Activated B cell treated with CpG ODN at 0.5 μM for 24 hours (primary cell): ENCODE measurements at regions of chr11 and their contacts with region 1.

Region 1: DNA sequence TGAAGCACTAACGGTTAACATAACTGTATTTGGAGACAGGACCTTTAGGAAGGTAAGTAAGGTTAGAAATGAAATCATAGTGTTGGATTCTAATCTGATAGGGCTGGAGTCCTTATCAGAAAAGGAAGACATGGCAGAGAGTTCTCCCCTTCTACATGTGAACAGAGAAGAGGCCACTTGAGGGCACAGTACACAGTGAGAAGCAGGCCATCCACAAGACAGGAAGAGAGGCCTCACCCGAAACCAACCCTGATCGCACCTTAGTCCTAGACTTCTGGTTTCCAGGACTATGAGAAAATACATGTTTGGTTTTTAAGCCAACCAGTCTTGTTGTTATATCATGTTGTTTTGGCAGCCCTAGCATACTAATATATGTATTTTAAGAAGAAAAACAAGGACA is 170.0 kb downstream of the LRRC4C start:
- DNase-seq: no peak
- ATAC-seq: no peak
- H3K4me3 Mint-ChIP-seq: no peak overlapping the region
- H3K27ac Mint-ChIP-seq: peak overlapping the region; percentile 16
- H3K4me1 Mint-ChIP-seq: peaks cover 3% of the 10 kb centered on the region
- H3K27me3 Mint-ChIP-seq: no peaks in the 10 kb centered on the region
- CTCF ChIP-seq: no peak

Region 2: DNA sequence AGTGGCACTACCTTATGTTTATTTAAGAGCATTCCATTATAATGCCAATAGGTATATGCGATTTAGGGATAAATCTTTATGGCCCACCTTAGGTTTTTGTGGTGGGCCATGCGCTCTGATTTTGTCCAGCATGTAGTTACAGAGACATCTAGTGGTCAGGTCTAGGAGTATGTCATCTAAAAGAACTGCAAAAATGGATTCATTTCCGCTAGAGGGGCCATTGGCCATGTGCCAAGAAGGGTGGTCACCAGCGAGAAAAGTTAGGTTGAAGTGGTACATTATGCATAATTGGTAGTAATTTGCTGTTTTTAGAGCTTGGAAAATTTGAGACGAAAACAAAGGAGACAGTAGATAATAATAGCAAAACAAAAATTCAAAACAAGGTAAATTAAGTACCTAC is 142.4 kb after region 1 on chr11:
- CTCF ChIA-PET with region 1: no interaction called
- POLR2A ChIA-PET with region 1: no interaction called
- intact Hi-C with region 1: loop called (anchors 5 kb)
- DNase-seq: no peak
- ATAC-seq: no peak
- H3K4me3 Mint-ChIP-seq: no peak overlapping the region
- H3K27ac Mint-ChIP-seq: no peak overlapping the region
- H3K4me1 Mint-ChIP-seq: no peaks in the 10 kb centered on the region
- H3K27me3 Mint-ChIP-seq: no peaks in the 10 kb centered on the region
- CTCF ChIP-seq: no peak